ENCODE measurements at regions of chr17 and their contacts with region 1.

Region 1: GRCh38 chr17:76166168-76166567 is 25.1 kb upstream of the FOXJ1 start:
- DNase-seq: no peak
- ATAC-seq: no peak
- H3K4me3 ChIP-seq: no peak overlapping the region
- H3K4me3 Mint-ChIP-seq: peak overlapping the region in 1 of 10 donors; percentile 30
- H3K27ac ChIP-seq: no peak overlapping the region
- H3K27ac Mint-ChIP-seq: peak overlapping the region in 6 of 9 donors; percentile 14 to 55 (median 39)
- H3K4me1 ChIP-seq: no peaks in the 10 kb centered on the region
- H3K4me1 Mint-ChIP-seq: peaks cover 7 to 36% (median 24%) of the 10 kb centered on the region in 7 donors
- H3K27me3 ChIP-seq: no peaks in the 10 kb centered on the region
- H3K27me3 Mint-ChIP-seq: no peaks in the 10 kb centered on the region

Region 2: GRCh38 chr17:76087531-76087930 is 78.6 kb before region 1 on chr17:
- CTCF ChIA-PET with region 1: no interaction called
- POLR2A ChIA-PET with region 1: no interaction called
- intact Hi-C with region 1: no loop called
- DNase-seq: no peak
- ATAC-seq: no peak
- H3K4me3 ChIP-seq: no peak overlapping the region
- H3K4me3 Mint-ChIP-seq: no peak overlapping the region
- H3K27ac ChIP-seq: no peak overlapping the region
- H3K27ac Mint-ChIP-seq: no peak overlapping the region
- H3K4me1 ChIP-seq: no peaks in the 10 kb centered on the region
- H3K4me1 Mint-ChIP-seq: peaks cover 0 to 11% (median 6%) of the 10 kb centered on the region in 7 donors
- H3K27me3 ChIP-seq: no peaks in the 10 kb centered on the region
- H3K27me3 Mint-ChIP-seq: no peaks in the 10 kb centered on the region

Region 3: DNA sequence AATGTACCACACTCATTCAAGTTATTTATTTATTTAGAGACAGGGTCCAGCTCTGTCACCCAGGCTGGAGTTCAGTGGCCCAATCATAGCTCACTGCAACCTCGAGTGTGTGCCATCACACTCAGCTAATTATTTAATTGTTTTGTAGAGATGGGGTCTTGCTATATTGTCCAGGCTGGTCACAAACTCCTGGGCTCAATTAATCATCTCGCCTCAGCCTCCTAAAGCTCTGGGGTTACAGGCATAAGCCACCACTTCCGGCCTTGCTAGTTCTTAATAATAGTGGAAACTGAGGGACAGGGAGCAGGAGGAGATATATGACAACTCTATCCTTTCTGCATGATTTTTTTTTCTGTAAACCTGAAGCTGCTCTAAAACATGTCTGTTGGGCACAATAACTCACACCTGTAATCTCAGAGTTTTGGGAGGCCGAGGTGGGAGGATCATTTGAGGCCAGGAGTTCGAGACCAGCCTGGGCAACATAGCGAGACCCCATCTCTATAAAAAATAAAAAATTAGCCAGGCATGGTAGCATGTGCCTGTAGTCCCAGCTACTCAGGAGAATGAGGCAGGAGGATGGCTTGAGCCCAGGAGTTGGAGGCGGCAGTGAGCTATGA is 50.9 kb before region 1 on chr17:
- CTCF ChIA-PET with region 1: no interaction called
- POLR2A ChIA-PET with region 1: no interaction called
- intact Hi-C with region 1: no loop called
- DNase-seq: no peak
- ATAC-seq: no peak
- H3K4me3 ChIP-seq: no peak overlapping the region
- H3K4me3 Mint-ChIP-seq: no peak overlapping the region
- H3K27ac ChIP-seq: no peak overlapping the region
- H3K27ac Mint-ChIP-seq: no peak overlapping the region
- H3K4me1 ChIP-seq: no peaks in the 10 kb centered on the region
- H3K4me1 Mint-ChIP-seq: no peaks in the 10 kb centered on the region
- H3K27me3 ChIP-seq: no peaks in the 10 kb centered on the region
- H3K27me3 Mint-ChIP-seq: peaks cover 0 to 12% (median 0%) of the 10 kb centered on the region in 5 donors

Region 4: GRCh38 chr17:76153640-76154039 is 12.5 kb before region 1 on chr17:
- CTCF ChIA-PET with region 1: interaction called, 6 read pairs
- POLR2A ChIA-PET with region 1: interaction called, 20 read pairs
- intact Hi-C with region 1: no loop called
- DNase-seq: no peak
- ATAC-seq: no peak
- H3K4me3 ChIP-seq: no peak overlapping the region
- H3K4me3 Mint-ChIP-seq: peak overlapping the region in 7 of 10 donors; percentile 11 to 81 (median 30)
- H3K27ac ChIP-seq: peak overlapping the region; percentile 52
- H3K27ac Mint-ChIP-seq: peak overlapping the region in 8 of 9 donors; percentile 93 to 99 (median 98)
- H3K4me1 ChIP-seq: peaks cover 13 to 48% of the 10 kb centered on the region in 2 donors
- H3K4me1 Mint-ChIP-seq: peaks cover 24 to 73% (median 64%) of the 10 kb centered on the region in 7 donors
- H3K27me3 ChIP-seq: no peaks in the 10 kb centered on the region
- H3K27me3 Mint-ChIP-seq: no peaks in the 10 kb centered on the region

Region 5: DNA sequence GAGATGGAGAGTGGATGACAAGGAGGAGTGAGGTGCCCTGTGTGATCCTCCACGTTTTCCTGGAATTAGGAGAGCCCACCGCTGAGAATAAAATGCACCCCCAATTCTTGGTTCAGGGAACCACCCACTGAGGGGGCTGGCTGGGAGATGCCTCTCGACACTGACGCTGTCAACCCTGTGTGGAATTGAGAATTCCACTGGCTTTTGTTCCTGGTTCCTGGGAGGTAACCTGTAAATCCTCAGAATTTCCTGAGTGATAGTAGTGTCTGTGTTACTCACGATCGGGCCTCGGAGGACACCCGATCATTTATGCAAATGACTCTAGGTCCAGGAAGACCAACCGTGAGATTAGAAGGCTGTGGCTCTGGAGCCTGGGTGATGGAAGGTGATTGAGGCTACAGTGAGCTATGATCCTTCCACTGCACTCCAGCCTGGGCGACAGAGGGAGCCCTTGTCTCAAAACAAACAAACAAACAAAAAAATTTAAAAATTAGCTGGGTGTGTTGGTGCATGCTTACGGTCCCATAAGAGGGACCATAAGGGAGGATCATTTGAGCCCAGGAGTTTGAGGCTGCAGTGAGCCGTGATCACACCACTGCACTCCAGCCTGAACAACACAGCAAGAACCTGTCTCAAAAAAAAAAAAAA is 199.2 kb after region 1 on chr17:
- CTCF ChIA-PET with region 1: no interaction called
- POLR2A ChIA-PET with region 1: no interaction called
- intact Hi-C with region 1: no loop called
- DNase-seq: no peak
- ATAC-seq: no peak
- H3K4me3 ChIP-seq: no peak overlapping the region
- H3K4me3 Mint-ChIP-seq: no peak overlapping the region
- H3K27ac ChIP-seq: no peak overlapping the region
- H3K27ac Mint-ChIP-seq: no peak overlapping the region
- H3K4me1 ChIP-seq: no peaks in the 10 kb centered on the region
- H3K4me1 Mint-ChIP-seq: peaks cover 0 to 3% (median 0%) of the 10 kb centered on the region in 7 donors
- H3K27me3 ChIP-seq: no peaks in the 10 kb centered on the region
- H3K27me3 Mint-ChIP-seq: peaks cover 0 to 8% (median 0%) of the 10 kb centered on the region in 5 donors

Measured in naive thymus-derived CD4-positive, alpha-beta T cell (primary cell).